T-cell (primary cell): ENCODE measurements at regions of chr12 and their contacts with region 1.

Region 1: DNA sequence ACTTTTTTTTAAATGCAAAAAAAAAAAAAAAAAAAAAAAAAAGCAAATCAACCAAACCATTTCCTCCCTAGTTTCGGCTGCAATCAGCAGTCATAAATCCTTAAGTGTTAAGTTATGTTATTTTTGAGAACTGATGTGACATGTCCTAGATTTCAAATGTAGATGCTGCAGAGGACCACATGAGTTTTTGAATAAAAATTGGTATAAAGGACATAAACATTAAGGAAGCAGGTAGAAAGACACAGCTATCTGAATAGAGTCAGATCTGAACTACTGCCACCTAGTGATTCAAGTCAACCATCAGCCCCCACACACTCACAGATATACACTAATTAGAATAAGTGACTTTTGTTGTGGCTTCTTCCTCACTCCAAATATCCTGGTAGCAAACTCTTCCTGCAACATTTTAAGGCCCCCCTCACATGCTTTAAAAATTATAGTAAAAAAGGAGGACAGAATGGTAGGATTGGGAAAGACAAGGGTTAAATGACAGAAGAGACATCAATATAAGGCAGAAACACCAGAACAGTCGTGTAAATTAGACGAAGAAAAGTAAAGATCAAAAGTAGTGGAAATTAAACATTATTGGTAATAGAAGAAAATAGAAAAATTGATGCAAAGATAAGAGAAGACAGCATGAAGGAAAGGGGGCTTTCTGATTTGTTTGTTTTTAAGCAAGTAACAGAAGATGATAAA is 394.5 kb upstream of the ATP2B1 start:
- DNase-seq: peak in 7 of 35 experiments; percentile 7 to 64 (median 15)
- ATAC-seq: peak; percentile 54 to 77 (median 62)
- H3K4me3 ChIP-seq: peak overlapping the region in 1 of 2 donors; percentile 20
- H3K4me3 Mint-ChIP-seq: peak overlapping the region in 2 of 3 donors; percentile 44 to 69
- H3K27ac ChIP-seq: no peak overlapping the region
- H3K27ac Mint-ChIP-seq: peak overlapping the region in 1 of 2 donors; percentile 23
- H3K4me1 ChIP-seq: peaks cover 0 to 6% of the 10 kb centered on the region in 2 experiments
- H3K4me1 Mint-ChIP-seq: peaks cover 5 to 16% (median 13%) of the 10 kb centered on the region in 3 donors
- H3K27me3 ChIP-seq: no peaks in the 10 kb centered on the region
- H3K27me3 Mint-ChIP-seq: peaks cover 0 to 5% of the 10 kb centered on the region in 2 donors

Region 2: DNA sequence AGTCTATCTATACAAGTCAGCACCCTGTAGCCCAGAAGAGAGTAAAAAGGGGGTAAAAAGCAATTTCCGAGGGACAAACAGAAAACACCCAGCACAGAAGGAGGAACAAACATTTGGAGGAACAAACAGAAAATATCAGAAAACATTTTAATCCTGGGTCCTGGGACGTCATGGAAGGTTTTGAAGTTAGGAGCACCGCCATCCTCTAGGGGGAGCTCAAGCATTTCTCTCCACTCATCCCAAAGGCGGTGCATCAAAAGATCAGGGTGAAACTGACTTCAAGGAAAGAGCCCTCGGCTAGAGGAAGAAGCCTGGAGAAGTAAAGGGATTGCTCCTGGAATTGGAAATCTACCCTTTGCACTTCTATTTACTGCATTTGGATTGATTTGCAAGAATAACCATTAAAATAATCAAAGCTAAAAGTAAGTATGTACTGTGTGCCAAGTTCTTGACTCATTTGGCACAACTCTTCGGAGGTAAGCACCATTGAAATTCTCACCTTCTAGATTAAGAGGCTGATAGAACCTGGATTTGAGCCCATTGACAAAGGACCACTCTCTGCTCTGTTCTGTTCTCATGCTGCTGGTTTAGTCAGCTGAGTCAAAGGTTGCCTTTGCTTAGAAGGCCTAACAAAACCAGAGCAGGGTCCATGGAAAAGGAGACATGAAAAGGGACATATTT is 560.1 kb before region 1 on chr12:
- CTCF ChIA-PET with region 1: interaction called, 20 to 25 read pairs
- POLR2A ChIA-PET with region 1: no interaction called
- DNase-seq: peak; percentile 5 to 84 (median 50)
- ATAC-seq: peak; percentile 68 to 87 (median 85)
- H3K4me3 ChIP-seq: no peak overlapping the region
- H3K4me3 Mint-ChIP-seq: no peak overlapping the region
- H3K27ac ChIP-seq: no peak overlapping the region
- H3K27ac Mint-ChIP-seq: no peak overlapping the region
- H3K4me1 ChIP-seq: peaks cover 0 to 2% of the 10 kb centered on the region in 2 experiments
- H3K4me1 Mint-ChIP-seq: peaks cover 4 to 9% (median 7%) of the 10 kb centered on the region in 3 donors
- H3K27me3 ChIP-seq: no peaks in the 10 kb centered on the region
- H3K27me3 Mint-ChIP-seq: peaks cover 2 to 6% of the 10 kb centered on the region in 2 donors

Region 3: GRCh38 chr12:89695100-89695499 is 408.0 kb before region 1 on chr12:
- CTCF ChIA-PET with region 1: no interaction called
- POLR2A ChIA-PET with region 1: interaction called in 1 of 2 experiments, 15 read pairs
- DNase-seq: no peak
- ATAC-seq: peak in 2 of 4 experiments; percentile 31 to 40
- H3K4me3 ChIP-seq: no peak overlapping the region
- H3K4me3 Mint-ChIP-seq: no peak overlapping the region
- H3K27ac ChIP-seq: no peak overlapping the region
- H3K27ac Mint-ChIP-seq: no peak overlapping the region
- H3K4me1 ChIP-seq: peaks cover 8 to 23% of the 10 kb centered on the region in 2 experiments
- H3K4me1 Mint-ChIP-seq: peaks cover 82 to 86% (median 86%) of the 10 kb centered on the region in 3 donors
- H3K27me3 ChIP-seq: no peaks in the 10 kb centered on the region
- H3K27me3 Mint-ChIP-seq: no peaks in the 10 kb centered on the region